ENCODE measurements at regions of chr21 and their contacts with region 1.

Region 1: GRCh38 chr21:32597205-32597604 is 11.9 kb upstream of the TCP10L start:
- DNase-seq: no peak
- ATAC-seq: no peak
- H3K4me3 ChIP-seq: no peak overlapping the region
- H3K27ac ChIP-seq: no peak overlapping the region
- H3K4me1 ChIP-seq: peaks cover 0 to 4% (median 0%) of the 10 kb centered on the region in 9 donors
- H3K27me3 ChIP-seq: no peaks in the 10 kb centered on the region
- CTCF ChIP-seq: no peak

Region 2: GRCh38 chr21:32173121-32173724 is 424.0 kb before region 1 on chr21:
- intact Hi-C with region 1: loop called in 1 of 10 experiments (anchors 10 kb)
- DNase-seq: no peak
- ATAC-seq: no peak
- H3K4me3 ChIP-seq: no peak overlapping the region
- H3K27ac ChIP-seq: no peak overlapping the region
- H3K4me1 ChIP-seq: no peaks in the 10 kb centered on the region
- H3K27me3 ChIP-seq: no peaks in the 10 kb centered on the region
- CTCF ChIP-seq: no peak